WTC11 (cell line): ENCODE measurements at regions of chr9 and their contacts with region 1.

Region 1: DNA sequence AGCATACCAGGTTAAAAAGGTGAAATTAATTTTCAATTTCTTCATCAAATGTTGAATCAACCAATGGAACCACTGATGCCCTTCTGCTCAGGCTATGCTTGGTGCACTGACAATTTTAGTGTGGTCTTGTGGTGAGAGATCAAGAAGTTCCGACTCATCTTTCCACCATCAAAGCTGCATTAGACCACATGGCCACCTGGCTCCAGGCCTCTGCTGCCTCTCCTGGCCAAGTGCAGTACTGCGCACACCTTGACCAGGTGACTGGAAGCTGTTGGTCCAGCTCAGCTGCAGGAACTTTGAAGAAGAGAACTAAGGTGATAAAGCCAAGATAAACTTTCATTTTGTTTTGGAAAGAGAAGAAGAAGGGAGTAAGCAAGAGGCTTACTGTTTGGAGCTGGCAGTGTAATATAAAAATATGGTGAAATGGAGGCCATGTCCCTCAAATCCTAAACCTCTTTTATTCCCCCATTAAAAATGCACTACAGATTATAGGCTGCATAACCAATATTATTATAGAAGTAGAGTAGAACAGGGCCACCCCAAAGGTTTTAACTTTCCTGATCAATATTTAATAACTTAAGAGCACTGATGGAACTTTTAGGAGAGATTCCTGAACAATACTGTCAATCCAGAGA is 315.5 kb upstream of the C9orf72 start:
- DNase-seq: peak; percentile 82
- ATAC-seq: peak; percentile 97
- H3K4me3 Mint-ChIP-seq: no peak overlapping the region
- H3K27ac Mint-ChIP-seq: no peak overlapping the region
- H3K4me1 Mint-ChIP-seq: no peaks in the 10 kb centered on the region
- H3K27me3 Mint-ChIP-seq: no peaks in the 10 kb centered on the region
- CTCF ChIP-seq: peak; percentile 92

Region 2: DNA sequence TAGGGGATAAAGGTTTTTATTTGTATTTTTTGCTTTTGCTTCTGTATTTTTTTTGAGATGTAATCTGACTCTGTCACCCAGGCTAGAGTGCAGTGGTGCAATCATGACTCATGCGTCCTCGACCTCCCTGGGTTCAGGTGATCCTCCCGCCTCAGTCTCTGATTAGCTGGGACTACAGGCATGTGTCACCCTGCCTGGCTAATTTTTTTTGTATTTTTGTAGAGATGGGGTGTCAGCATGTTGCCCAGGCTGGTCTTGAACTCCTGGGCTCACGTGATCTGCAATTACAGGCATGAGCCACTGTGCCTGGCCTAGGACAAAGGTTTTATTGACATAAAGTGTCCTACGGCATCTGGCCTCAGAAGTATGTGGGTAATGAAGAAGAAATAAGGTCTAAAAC is 18.4 kb before region 1 on chr9:
- CTCF ChIA-PET with region 1: interaction called, 12 read pairs
- POLR2A ChIA-PET with region 1: no interaction called
- DNase-seq: no peak
- ATAC-seq: no peak
- H3K4me3 Mint-ChIP-seq: no peak overlapping the region
- H3K27ac Mint-ChIP-seq: no peak overlapping the region
- H3K4me1 Mint-ChIP-seq: peaks cover 36% of the 10 kb centered on the region
- H3K27me3 Mint-ChIP-seq: peaks cover 2% of the 10 kb centered on the region; the same call in 1 of the 2 replicates
- CTCF ChIP-seq: no peak